ENCODE measurements at regions of chr2 and their contacts with region 1.

Region 1: GRCh38 chr2:144026753-144027152 is 493.2 kb downstream of the ZEB2 start:
- DNase-seq: no peak
- H3K4me3 Mint-ChIP-seq: no peak overlapping the region
- H3K27ac Mint-ChIP-seq: no peak overlapping the region
- H3K4me1 Mint-ChIP-seq: no peaks in the 10 kb centered on the region
- H3K27me3 Mint-ChIP-seq: no peaks in the 10 kb centered on the region
- CTCF ChIP-seq: no peak

Region 2: GRCh38 chr2:143742581-143742980 is 284.2 kb before region 1 on chr2:
- CTCF ChIA-PET with region 1: no interaction called
- intact Hi-C with region 1: no loop called
- DNase-seq: no peak
- H3K4me3 Mint-ChIP-seq: no peak overlapping the region
- H3K27ac Mint-ChIP-seq: no peak overlapping the region
- H3K4me1 Mint-ChIP-seq: peaks cover 9% of the 10 kb centered on the region
- H3K27me3 Mint-ChIP-seq: no peaks in the 10 kb centered on the region
- CTCF ChIP-seq: no peak

Region 3: DNA sequence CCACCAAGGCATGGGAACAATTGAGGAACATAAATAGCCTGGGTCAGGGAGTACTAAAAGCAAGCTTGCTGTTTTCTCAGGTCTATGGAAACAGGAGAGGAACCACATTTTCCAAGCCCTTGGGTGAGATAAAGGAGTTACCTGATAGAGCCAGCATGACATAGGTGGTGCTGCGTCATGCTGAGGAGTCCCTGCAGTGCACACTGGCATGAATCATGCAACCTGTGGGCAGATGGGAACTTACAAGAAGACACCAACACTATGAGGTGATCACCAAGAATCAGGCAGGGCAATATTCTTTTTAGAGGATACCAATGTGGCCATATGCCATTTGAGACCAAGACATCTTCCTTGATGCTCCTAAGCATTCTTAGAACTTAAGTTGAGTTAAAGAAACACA is 38.7 kb before region 1 on chr2:
- CTCF ChIA-PET with region 1: no interaction called
- intact Hi-C with region 1: no loop called
- DNase-seq: no peak
- H3K4me3 Mint-ChIP-seq: no peak overlapping the region
- H3K27ac Mint-ChIP-seq: no peak overlapping the region
- H3K4me1 Mint-ChIP-seq: no peaks in the 10 kb centered on the region
- H3K27me3 Mint-ChIP-seq: no peaks in the 10 kb centered on the region
- CTCF ChIP-seq: no peak

Region 4: GRCh38 chr2:144010096-144010836 is 16.5 kb before region 1 on chr2:
- CTCF ChIA-PET with region 1: no interaction called
- intact Hi-C with region 1: loop called (anchors 1 kb)
- DNase-seq: no peak
- H3K4me3 Mint-ChIP-seq: no peak overlapping the region
- H3K27ac Mint-ChIP-seq: no peak overlapping the region
- H3K4me1 Mint-ChIP-seq: no peaks in the 10 kb centered on the region
- H3K27me3 Mint-ChIP-seq: no peaks in the 10 kb centered on the region
- CTCF ChIP-seq: no peak

Region 5: GRCh38 chr2:144414324-144414845 is 387.6 kb after region 1 on chr2:
- CTCF ChIA-PET with region 1: no interaction called
- intact Hi-C with region 1: no loop called
- DNase-seq: peak; percentile 0
- H3K4me3 Mint-ChIP-seq: no peak overlapping the region
- H3K27ac Mint-ChIP-seq: no peak overlapping the region
- H3K4me1 Mint-ChIP-seq: no peaks in the 10 kb centered on the region
- H3K27me3 Mint-ChIP-seq: no peaks in the 10 kb centered on the region
- CTCF ChIP-seq: no peak